K562 (cell line): ENCODE measurements at regions of chr12 and their contacts with region 1.

Region 1: GRCh38 chr12:98593351-98594049 is at the start of gene SLC25A3:
- DNase-seq: peak; percentile 95 to 98 (median 96)
- ATAC-seq: peak; percentile 96
- H3K4me3 ChIP-seq: peak within 1 kb of the TSS; percentile 100
- H3K27ac ChIP-seq: peak within 1 kb of the TSS; percentile 98
- H3K4me1 ChIP-seq: peaks cover 16 to 18% of the 10 kb centered on the region in 2 experiments; a peak in 4 of 5 replicates
- H3K27me3 ChIP-seq: no peaks in the 10 kb centered on the region
- CTCF ChIP-seq: 0 out of 6 replicates have a peak, but pooled peaks of 2 of the 3 experiments have one; percentile 9 to 19
- EP300 ChIP-seq: peak; percentile 37; the same call in 1 of the 2 replicates
- POLR2A ChIP-seq: peak; percentile 98
- RAD21 ChIP-seq: no peak; a peak in 1 of 4 replicates
- polyA plus RNA-seq, gene SLC25A3: 264 to 309 TPM

Region 2: GRCh38 chr12:98456576-98457573 is 136.6 kb before region 1 on chr12:
- CTCF ChIA-PET with region 1: no interaction called
- POLR2A ChIA-PET with region 1: no interaction called
- in situ Hi-C with region 1: no loop called
- intact Hi-C with region 1: no loop called
- DNase-seq: peak; percentile 32 to 46 (median 37)
- ATAC-seq: peak; percentile 90
- H3K4me3 ChIP-seq: 0 out of 2 replicates have a peak overlapping the region, but pooled peaks have one; percentile 13
- H3K27ac ChIP-seq: no peak overlapping the region
- H3K4me1 ChIP-seq: peaks cover 0 to 7% of the 10 kb centered on the region in 2 experiments; a peak in 2 of 5 replicates
- H3K27me3 ChIP-seq: peaks cover 38 to 45% of the 10 kb centered on the region in 2 experiments
- CTCF ChIP-seq: no peak
- EP300 ChIP-seq: no peak
- POLR2A ChIP-seq: no peak
- RAD21 ChIP-seq: no peak

Region 3: GRCh38 chr12:98485792-98486340 is 107.6 kb before region 1 on chr12:
- CTCF ChIA-PET with region 1: no interaction called
- POLR2A ChIA-PET with region 1: no interaction called
- in situ Hi-C with region 1: no loop called
- intact Hi-C with region 1: no loop called
- DNase-seq: no peak
- ATAC-seq: no peak
- H3K4me3 ChIP-seq: no peak overlapping the region
- H3K27ac ChIP-seq: no peak overlapping the region
- H3K4me1 ChIP-seq: peaks cover 0 to 1% of the 10 kb centered on the region in 2 experiments; a peak in 3 of 5 replicates
- H3K27me3 ChIP-seq: peaks cover 9 to 10% of the 10 kb centered on the region in 2 experiments; a peak in 3 of 5 replicates
- CTCF ChIP-seq: no peak
- EP300 ChIP-seq: no peak
- POLR2A ChIP-seq: no peak
- RAD21 ChIP-seq: no peak

Region 4: DNA sequence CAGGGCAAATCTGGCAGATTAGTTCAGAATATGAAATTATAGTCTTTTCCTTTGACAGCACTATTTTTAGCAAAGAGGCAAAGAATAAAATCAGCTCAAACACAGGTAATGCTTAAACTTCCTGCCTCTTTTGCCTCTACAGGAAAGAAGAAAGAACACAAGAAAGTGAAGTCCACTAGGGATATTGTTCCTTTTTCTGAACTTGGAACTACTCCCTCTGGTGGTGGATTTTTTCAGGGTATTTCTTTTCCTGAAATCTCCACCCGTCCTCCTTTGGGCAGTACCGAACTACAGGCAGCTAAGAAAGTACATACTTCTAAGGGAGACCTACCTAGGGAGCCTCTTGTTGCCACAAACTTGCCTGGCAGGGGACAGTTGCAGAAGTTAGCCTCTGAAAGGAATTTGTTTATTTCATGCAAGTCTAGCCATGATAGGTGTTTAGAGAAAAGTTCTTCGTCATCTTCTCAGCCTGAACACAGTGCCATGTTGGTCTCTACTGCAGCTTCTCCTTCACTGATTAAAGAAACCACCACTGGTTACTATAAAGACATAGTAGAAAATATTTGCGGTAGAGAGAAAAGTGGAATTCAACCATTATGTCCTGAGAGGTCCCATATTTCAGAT is 60.7 kb before region 1 on chr12:
- CTCF ChIA-PET with region 1: no interaction called
- POLR2A ChIA-PET with region 1: interaction called, 4 read pairs
- in situ Hi-C with region 1: no loop called
- intact Hi-C with region 1: loop called (anchors 5 kb)
- DNase-seq: peak; percentile 46 to 74 (median 50)
- ATAC-seq: peak; percentile 85
- H3K4me3 ChIP-seq: no peak overlapping the region
- H3K27ac ChIP-seq: no peak overlapping the region; the same call in 2 of the 3 replicates
- H3K4me1 ChIP-seq: peaks cover 0 to 12% of the 10 kb centered on the region in 2 experiments; a peak in 3 of 5 replicates
- H3K27me3 ChIP-seq: no peaks in the 10 kb centered on the region
- CTCF ChIP-seq: peak; percentile 67 to 83 (median 73)
- EP300 ChIP-seq: no peak
- POLR2A ChIP-seq: no peak
- RAD21 ChIP-seq: peak; percentile 57 to 62

Region 5: DNA sequence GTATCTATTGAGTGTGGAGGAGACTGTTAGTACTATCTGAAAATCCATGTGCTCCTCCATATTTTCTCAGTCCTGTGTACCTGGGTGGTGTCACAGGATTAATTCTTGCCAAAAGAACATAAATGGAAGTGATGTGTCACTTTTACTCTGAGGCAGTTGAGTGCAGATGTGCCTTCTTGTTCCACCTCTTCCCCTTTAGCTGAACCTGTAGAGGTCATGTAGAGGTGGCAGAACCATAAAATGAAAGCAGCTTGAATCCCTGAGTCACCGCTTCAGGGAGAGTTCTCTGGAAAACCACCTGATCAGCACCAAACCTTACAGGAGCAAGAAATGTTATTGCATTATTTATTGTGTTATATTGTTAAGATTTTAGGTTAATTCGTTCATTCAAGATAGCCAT is 14.7 kb before region 1 on chr12:
- CTCF ChIA-PET with region 1: no interaction called
- POLR2A ChIA-PET with region 1: interaction called, 29 read pairs
- in situ Hi-C with region 1: no loop called
- intact Hi-C with region 1: no loop called
- DNase-seq: peak in 3 of 4 experiments; percentile 26 to 78 (median 58)
- ATAC-seq: peak; percentile 87
- H3K4me3 ChIP-seq: no peak overlapping the region
- H3K27ac ChIP-seq: peak overlapping the region; percentile 59
- H3K4me1 ChIP-seq: peaks cover 4 to 15% of the 10 kb centered on the region in 2 experiments; a peak in 3 of 5 replicates
- H3K27me3 ChIP-seq: no peaks in the 10 kb centered on the region
- CTCF ChIP-seq: no peak
- EP300 ChIP-seq: peak; percentile 26; the same call in 1 of the 2 replicates
- POLR2A ChIP-seq: no peak
- RAD21 ChIP-seq: no peak

Region 6: DNA sequence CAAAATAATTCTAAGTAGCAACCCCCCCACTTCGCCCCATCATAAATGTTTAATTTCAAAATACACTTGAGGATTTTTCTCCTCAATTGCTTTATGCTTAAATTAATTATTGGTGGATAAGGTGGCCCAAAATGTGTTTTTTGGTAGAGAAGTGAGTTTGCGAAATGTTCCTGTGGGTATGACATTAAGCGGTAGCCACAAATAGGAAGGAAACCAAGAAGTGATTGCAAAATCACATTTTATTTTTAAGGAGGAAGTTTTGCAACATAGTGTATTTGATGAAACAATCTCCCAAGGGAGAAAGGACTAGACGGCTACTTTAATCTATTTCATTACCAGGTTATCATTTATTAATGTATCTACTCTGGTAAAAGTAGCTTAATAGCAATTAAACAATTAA is 25.5 kb after region 1 on chr12:
- CTCF ChIA-PET with region 1: no interaction called
- POLR2A ChIA-PET with region 1: interaction called, 10 read pairs
- in situ Hi-C with region 1: no loop called
- intact Hi-C with region 1: no loop called
- DNase-seq: no peak
- ATAC-seq: no peak
- H3K4me3 ChIP-seq: no peak overlapping the region
- H3K27ac ChIP-seq: no peak overlapping the region
- H3K4me1 ChIP-seq: no peaks in the 10 kb centered on the region; a peak in 1 of 5 replicates
- H3K27me3 ChIP-seq: no peaks in the 10 kb centered on the region
- CTCF ChIP-seq: no peak
- EP300 ChIP-seq: no peak
- POLR2A ChIP-seq: no peak
- RAD21 ChIP-seq: no peak

Region 7: GRCh38 chr12:98653866-98654493 is 60.5 kb after region 1 on chr12:
- CTCF ChIA-PET with region 1: no interaction called
- POLR2A ChIA-PET with region 1: interaction called, 12 read pairs
- in situ Hi-C with region 1: no loop called
- intact Hi-C with region 1: no loop called
- DNase-seq: peak; percentile 23 to 69 (median 29)
- ATAC-seq: peak; percentile 61
- H3K4me3 ChIP-seq: no peak overlapping the region
- H3K27ac ChIP-seq: no peak overlapping the region
- H3K4me1 ChIP-seq: peaks cover 0 to 12% of the 10 kb centered on the region in 2 experiments; a peak in 2 of 5 replicates
- H3K27me3 ChIP-seq: no peaks in the 10 kb centered on the region
- CTCF ChIP-seq: peak; percentile 42 to 79 (median 59); a peak in 5 of 6 replicates
- EP300 ChIP-seq: no peak
- POLR2A ChIP-seq: no peak
- RAD21 ChIP-seq: peak; percentile 69 to 84